Right ventricle myocardium inferior (tissue), 1 donor: ENCODE measurements at regions of chr20 and their contacts with region 1.

Region 1: DNA sequence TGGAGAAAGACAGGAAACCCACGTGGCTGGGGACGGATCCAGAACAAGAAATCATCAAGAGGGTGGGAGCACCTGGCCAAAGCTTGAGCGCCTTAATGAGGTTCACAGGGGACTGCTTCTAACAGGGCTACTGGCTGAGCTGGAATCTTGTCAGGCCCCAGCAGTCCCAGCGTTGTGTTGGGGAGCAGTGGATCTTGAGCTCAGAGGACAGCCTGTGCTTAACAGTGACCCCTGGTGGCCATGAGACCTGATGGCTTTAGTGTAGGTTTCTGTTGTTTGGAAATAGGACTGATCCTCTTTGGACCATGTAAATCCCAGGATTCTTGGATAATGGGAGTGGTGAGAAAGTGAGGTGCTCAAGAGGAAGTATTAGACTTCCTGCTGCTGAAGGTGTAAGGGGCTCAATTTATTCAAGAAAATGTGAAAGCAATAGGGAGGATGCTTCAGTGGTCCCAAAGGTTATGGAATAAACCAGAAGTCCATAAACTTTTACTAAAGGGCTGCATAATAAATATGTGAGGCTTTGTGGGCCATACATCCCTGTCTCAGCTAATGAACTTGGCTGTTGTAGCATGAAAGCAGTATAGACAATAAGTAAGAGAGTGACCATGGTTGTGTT is 216.2 kb downstream of the NFATC2 start:
- DNase-seq: no peak
- ATAC-seq: no peak

Region 2: GRCh38 chr20:50987592-50988210 is 338.6 kb before region 1 on chr20:
- intact Hi-C with region 1: loop called (anchors 5 kb)
- DNase-seq: no peak
- ATAC-seq: peak; percentile 88